ENCODE measurements at regions of chr3 and their contacts with region 1.

Region 1: GRCh38 chr3:13648060-13649001 is 99.4 kb downstream of the FBLN2 start:
- DNase-seq: peak; percentile 75
- H3K4me3 ChIP-seq: no peak overlapping the region
- H3K27ac ChIP-seq: no peak overlapping the region
- H3K27me3 ChIP-seq: no peaks in the 10 kb centered on the region
- CTCF ChIP-seq: peak; percentile 100

Region 2: DNA sequence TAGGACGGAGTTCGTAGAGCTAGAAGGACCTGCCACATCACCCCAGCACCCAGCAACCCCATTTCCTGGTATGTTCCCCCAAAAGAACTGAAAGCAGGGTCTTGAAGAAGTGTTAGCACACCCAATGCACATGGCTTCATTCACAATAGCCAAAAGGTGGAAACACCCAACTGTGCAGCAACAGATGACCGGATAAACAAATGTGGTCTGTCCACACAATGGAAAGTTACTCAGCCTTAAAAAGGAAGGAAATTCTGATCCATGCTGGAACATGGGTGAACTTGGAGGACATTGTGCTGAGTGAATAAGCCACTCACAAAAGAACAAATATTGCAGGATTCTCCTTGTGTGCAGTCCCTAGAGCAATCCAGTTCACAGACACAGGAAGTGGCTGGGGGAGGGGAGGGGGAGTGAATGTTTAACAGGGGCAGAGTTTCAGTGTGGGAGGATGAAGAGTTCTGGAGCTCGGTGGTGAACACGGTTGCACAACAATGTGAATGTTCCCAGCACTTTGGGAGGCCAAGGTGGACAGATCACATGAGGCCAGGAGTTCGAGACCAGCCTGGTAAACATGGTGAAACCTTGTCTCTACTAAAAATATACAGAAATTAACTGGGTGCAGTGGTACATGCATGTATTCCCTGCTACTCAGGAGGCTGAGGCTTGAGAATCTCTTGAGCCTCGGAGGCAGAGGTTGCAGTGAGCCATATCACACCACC is 385.7 kb before region 1 on chr3:
- in situ Hi-C with region 1: no loop called
- DNase-seq: no peak
- H3K4me3 ChIP-seq: no peak overlapping the region
- H3K27ac ChIP-seq: no peak overlapping the region
- H3K27me3 ChIP-seq: no peaks in the 10 kb centered on the region
- CTCF ChIP-seq: no peak

Region 3: GRCh38 chr3:13308380-13308801 is 339.9 kb before region 1 on chr3:
- in situ Hi-C with region 1: no loop called
- DNase-seq: peak; percentile 51
- H3K4me3 ChIP-seq: no peak overlapping the region
- H3K27ac ChIP-seq: no peak overlapping the region
- H3K27me3 ChIP-seq: no peaks in the 10 kb centered on the region
- CTCF ChIP-seq: peak; percentile 67

Region 4: DNA sequence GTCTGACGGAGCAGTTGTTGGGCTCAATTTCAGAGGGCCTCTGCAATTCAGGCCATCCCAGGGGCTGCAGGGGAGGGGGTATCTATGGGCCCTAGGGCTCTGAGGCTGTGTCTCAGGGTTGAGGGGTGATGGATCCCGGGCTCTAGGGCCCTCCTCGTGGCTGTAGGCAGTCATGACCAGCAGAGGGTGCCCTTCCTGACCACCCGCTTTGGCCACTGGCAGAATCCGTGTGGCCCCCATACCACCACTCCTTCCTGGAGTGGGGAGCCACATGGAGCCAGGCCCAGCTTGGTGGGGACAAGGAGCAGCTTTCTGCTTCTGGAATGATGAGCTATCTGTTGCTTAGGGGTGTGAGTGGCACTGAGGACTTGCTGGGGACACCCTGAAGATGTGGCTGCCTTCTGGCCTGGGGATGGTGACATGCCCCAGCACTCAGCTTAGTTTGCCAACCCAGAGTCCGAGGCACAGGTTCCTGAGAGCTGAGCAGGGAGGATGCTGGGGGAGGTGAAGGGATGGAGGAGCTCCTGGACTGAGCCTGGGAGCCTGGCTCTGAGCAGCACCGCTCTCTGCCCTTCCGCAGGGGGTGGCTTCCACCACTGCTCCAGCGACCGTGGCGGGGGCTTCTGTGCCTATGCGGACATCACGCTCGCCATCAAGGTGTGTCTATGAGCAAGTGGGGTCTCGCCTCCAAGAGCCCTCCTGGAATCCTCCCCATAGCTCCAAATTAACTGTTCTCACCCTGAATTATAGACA is 148.0 kb before region 1 on chr3:
- in situ Hi-C with region 1: loop called (anchors 25 kb)
- DNase-seq: peak; percentile 14
- H3K4me3 ChIP-seq: no peak overlapping the region
- H3K27ac ChIP-seq: no peak overlapping the region
- H3K27me3 ChIP-seq: no peaks in the 10 kb centered on the region
- CTCF ChIP-seq: peak; percentile 84

Region 5: DNA sequence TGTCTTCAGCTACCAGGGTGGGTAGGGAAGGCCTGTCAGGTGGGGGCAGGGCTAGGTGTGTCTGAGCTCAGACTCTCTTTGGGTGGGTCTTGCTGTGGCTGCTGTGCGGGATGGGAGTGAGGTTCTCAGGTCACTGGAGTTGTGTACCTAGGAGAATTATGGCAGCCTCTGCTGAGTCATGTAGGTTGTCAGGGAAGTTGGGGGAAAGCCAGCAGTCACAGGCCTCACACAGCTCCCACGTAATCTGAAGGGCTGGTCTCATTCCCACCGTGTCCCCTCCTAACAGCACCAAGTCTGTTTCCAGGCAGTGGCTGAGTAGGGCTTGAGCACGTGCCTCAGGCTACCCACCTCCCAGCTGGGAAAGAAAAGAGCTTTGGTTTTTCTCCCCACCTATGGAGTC is 409.4 kb after region 1 on chr3:
- in situ Hi-C with region 1: no loop called
- DNase-seq: no peak
- H3K4me3 ChIP-seq: no peak overlapping the region
- H3K27ac ChIP-seq: no peak overlapping the region
- H3K27me3 ChIP-seq: no peaks in the 10 kb centered on the region
- CTCF ChIP-seq: no peak

Measured in brain microvascular endothelial cell (primary cell).